Ovary (tissue), 10 donors: ENCODE measurements at regions of chr4 and their contacts with region 1.

Region 1: GRCh38 chr4:108834835-108835384 is 72.1 kb upstream of the ETNPPL start:
- DNase-seq: no peak
- H3K4me3 ChIP-seq: no peak overlapping the region
- H3K27ac ChIP-seq: no peak overlapping the region
- H3K4me1 ChIP-seq: no peaks in the 10 kb centered on the region
- H3K27me3 ChIP-seq: no peaks in the 10 kb centered on the region
- CTCF ChIP-seq: peak in 2 of 3 donors; percentile 30 to 44
- EP300 ChIP-seq: no peak
- POLR2A ChIP-seq: no peak

Region 2: DNA sequence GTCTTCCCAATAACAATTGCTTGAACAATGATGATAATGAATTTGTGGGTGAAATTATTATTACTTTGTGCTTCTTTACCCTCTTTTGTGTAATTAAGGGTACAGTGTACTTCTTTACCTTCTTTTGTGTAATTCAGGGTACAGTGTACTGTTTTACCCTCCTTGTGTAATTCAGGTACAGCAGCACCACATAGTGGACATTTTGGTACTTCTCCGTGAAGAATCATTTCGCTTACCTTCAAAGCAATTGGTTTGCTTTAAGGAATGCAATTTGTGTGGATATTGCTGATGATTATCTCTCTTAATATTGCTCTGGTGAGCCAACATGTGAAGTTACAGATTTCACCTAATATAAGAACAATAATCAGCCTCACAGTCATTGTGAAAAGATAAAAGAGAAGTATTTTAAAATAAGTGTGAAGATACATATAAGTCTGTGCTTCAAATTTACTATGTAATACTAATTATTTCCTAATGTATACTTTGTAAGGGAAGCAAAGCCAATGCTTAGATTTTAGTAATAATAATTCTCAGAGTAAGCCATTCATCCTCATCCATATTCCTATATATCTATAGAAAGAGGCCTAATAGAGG is 571.5 kb after region 1 on chr4:
- intact Hi-C with region 1: loop called (anchors 5 to 10 kb)
- DNase-seq: no peak
- H3K4me3 ChIP-seq: no peak overlapping the region
- H3K27ac ChIP-seq: no peak overlapping the region
- H3K4me1 ChIP-seq: no peaks in the 10 kb centered on the region
- H3K27me3 ChIP-seq: no peaks in the 10 kb centered on the region
- CTCF ChIP-seq: peak; percentile 21 to 42 (median 22)
- EP300 ChIP-seq: no peak
- POLR2A ChIP-seq: no peak